ENCODE measurements at regions of chr17 and their contacts with region 1.

Region 1: GRCh38 chr17:68782789-68783188 is 172.4 kb downstream of the ABCA8 start:
- DNase-seq: no peak
- H3K4me3 ChIP-seq: no peak overlapping the region
- H3K27ac ChIP-seq: no peak overlapping the region
- H3K4me1 ChIP-seq: no peaks in the 10 kb centered on the region
- H3K27me3 ChIP-seq: no peaks in the 10 kb centered on the region
- CTCF ChIP-seq: no peak
- EP300 ChIP-seq: no peak
- POLR2A ChIP-seq: no peak

Region 2: GRCh38 chr17:68662037-68662432 is 120.8 kb before region 1 on chr17:
- intact Hi-C with region 1: no loop called
- DNase-seq: no peak
- H3K4me3 ChIP-seq: no peak overlapping the region
- H3K27ac ChIP-seq: no peak overlapping the region
- H3K4me1 ChIP-seq: no peaks in the 10 kb centered on the region
- H3K27me3 ChIP-seq: no peaks in the 10 kb centered on the region
- CTCF ChIP-seq: no peak
- EP300 ChIP-seq: no peak
- POLR2A ChIP-seq: no peak

Region 3: DNA sequence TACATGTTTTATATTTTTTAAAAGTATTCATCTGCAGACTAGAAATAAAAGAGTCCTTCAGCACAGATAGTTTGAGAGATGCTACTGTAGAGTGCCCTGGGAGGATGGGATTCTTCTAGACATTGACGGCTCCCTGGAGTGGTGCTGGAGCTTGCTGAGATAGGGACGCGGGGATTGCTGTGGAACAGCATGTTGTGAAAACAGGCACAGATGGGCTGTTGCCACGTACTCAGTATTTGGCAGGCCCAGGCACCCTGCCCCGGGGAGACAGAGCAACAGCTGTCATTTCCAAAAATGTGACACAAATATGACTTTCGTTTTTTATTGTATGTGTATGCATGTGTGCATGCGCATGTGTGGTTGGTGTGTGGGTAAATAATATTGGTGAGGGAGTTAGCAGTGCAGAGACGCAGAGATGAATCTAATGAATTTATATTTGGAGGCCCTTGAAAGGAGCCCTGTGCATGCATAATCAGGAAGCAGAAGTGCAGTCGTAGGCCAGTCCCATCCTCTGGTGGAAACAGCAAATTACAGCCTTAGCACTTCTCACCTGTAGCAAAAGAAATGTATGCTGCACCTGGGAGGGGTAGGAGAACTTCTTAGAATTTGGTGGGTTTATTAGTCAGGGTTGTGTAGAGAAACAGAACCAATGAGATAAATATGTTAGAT is 178.6 kb after region 1 on chr17:
- intact Hi-C with region 1: loop called (anchors 5 kb)
- DNase-seq: no peak
- H3K4me3 ChIP-seq: no peak overlapping the region
- H3K27ac ChIP-seq: no peak overlapping the region
- H3K4me1 ChIP-seq: no peaks in the 10 kb centered on the region
- H3K27me3 ChIP-seq: no peaks in the 10 kb centered on the region
- CTCF ChIP-seq: no peak
- EP300 ChIP-seq: no peak
- POLR2A ChIP-seq: no peak